Activated B cell treated with CpG ODN at 0.5 μM for 24 hours (primary cell): ENCODE measurements at regions of chr7 and their contacts with region 1.

Region 1: DNA sequence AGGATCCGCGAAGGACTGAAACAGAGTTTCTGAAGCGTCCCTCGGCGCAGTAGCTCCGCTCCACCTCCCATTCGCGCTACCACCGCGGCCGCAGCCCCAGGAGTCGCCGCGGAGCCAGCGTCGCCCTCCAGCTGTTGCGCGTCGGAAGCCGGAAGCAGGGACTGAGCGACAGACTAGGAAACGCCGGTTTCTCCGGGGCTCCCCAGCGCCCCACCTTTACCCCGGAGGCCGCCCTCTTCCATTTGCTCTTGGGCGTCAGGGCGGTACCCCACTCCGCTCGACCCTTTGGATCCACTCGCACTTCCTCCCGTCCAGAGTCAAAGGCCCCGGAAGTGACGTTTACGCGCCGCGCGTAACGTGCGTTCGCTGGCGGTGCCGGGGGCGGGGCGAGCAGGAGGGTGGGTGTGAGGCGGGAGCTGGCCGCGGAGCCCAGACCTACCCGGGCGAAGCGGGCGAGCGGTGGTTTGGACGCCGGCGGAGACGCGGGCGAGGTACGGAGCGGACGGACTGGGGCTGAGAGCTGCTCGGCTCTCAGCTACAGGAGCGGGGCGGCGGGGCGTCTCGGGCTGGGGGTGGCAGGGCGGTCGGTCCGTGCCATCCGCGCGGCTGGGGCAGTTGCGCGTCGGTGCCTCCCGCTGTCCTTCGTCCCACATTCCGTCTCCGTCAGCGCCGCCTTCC is at the start of gene RABGEF1:
- DNase-seq: peak; percentile 96
- ATAC-seq: peak; percentile 84
- H3K4me3 Mint-ChIP-seq: peak within 1 kb of the TSS; percentile 93
- H3K27ac Mint-ChIP-seq: peak within 1 kb of the TSS; percentile 94
- H3K4me1 Mint-ChIP-seq: peaks cover 74% of the 10 kb centered on the region
- H3K27me3 Mint-ChIP-seq: no peaks in the 10 kb centered on the region
- CTCF ChIP-seq: no peak
- total RNA-seq, gene RABGEF1: 19.7 and 21.1 TPM in 2 replicates

Region 2: DNA sequence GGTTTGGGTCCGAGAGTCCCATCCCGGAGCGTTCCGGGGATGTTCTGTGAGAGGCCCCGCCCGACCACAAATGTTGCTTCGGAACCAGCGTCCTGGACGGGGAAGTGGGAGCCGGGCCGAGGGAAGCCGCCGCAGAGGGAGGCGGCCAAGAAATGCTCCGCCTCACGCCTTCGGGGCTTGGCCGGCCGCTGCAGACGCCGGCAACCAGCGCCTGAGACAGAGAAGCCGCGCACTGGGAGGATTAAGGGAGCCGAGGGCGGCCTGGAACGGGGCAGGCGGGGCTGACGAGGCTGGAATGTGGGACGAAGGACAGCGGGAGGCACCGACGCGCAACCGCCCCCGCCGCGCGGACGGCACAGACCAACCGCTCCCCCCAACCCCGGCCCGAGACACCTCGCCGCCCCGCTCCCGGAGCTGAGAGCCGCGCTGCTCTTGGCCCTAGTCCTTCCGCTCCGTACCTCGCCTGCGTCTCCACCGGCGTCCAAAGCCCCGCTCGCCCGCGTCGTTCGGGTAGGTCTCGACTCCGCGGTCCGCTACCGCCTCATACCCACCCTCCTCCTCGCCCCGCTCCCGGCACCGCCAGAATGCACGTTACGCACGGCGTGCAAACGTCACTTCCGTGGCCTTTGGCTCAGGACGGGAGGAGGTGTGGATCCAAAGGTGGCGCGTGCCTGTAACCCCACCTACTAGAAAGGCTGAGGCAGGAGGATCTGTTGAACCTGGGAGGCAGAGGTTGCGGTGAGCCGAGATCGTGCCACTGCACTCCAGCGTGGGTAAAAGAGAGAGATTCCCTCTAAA is 148.4 kb before region 1 on chr7:
- CTCF ChIA-PET with region 1: no interaction called
- POLR2A ChIA-PET with region 1: interaction called, 7 read pairs
- intact Hi-C with region 1: loop called (anchors 1 kb)
- DNase-seq: peak; percentile 80
- ATAC-seq: peak; percentile 98
- H3K4me3 Mint-ChIP-seq: peak overlapping the region; percentile 98
- H3K27ac Mint-ChIP-seq: peak overlapping the region; percentile 91
- H3K4me1 Mint-ChIP-seq: peaks cover 52% of the 10 kb centered on the region
- H3K27me3 Mint-ChIP-seq: no peaks in the 10 kb centered on the region
- CTCF ChIP-seq: no peak

Region 3: DNA sequence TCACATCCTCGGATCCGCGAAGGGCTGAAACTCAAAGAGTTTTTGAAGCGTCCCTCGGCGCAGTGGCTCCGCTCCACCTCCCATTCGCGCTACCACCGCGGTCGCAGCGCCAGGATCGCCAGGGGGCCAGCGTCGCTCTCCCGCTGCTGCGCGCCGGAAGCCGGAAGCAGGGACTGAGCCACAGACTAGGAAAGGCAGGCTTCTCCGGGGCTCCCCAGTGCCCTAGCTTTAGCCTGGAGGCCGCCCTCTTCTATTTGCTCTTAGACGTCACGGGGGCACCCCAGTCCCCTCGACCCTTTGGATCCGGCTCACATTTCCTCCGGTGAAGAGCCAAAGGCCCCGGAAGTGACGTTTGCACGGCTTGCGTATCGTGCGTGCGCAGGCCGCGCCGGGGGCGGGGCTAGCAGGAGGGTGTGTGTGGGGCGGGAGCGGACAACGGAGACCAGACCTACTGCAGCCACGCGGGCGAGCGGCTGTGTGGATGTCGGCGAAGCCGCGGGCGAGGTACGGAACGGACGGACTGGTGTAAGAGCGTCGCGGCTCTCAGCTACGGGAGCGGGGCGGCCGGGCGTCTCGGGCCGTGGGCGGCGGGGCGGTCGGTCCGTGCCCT is 86.2 kb before region 1 on chr7:
- CTCF ChIA-PET with region 1: no interaction called
- POLR2A ChIA-PET with region 1: interaction called, 16 read pairs
- intact Hi-C with region 1: loop called (anchors 1 kb)
- DNase-seq: peak; percentile 97
- ATAC-seq: peak; percentile 91
- H3K4me3 Mint-ChIP-seq: peak overlapping the region; percentile 94
- H3K27ac Mint-ChIP-seq: peak overlapping the region; percentile 96
- H3K4me1 Mint-ChIP-seq: peaks cover 30% of the 10 kb centered on the region
- H3K27me3 Mint-ChIP-seq: no peaks in the 10 kb centered on the region
- CTCF ChIP-seq: no peak

Region 4: GRCh38 chr7:66681491-66682349 is 58.7 kb before region 1 on chr7:
- CTCF ChIA-PET with region 1: no interaction called
- POLR2A ChIA-PET with region 1: interaction called, 8 read pairs
- intact Hi-C with region 1: loop called (anchors 1 kb)
- DNase-seq: peak; percentile 95
- ATAC-seq: peak; percentile 93
- H3K4me3 Mint-ChIP-seq: peak overlapping the region; percentile 89
- H3K27ac Mint-ChIP-seq: peak overlapping the region; percentile 89
- H3K4me1 Mint-ChIP-seq: peaks cover 48% of the 10 kb centered on the region
- H3K27me3 Mint-ChIP-seq: no peaks in the 10 kb centered on the region
- CTCF ChIP-seq: no peak

Region 5: GRCh38 chr7:66758950-66759628 is 18.6 kb after region 1 on chr7:
- CTCF ChIA-PET with region 1: no interaction called
- POLR2A ChIA-PET with region 1: interaction called, 4 read pairs
- intact Hi-C with region 1: loop called (anchors 1 kb)
- DNase-seq: no peak
- ATAC-seq: peak; percentile 85
- H3K4me3 Mint-ChIP-seq: peak overlapping the region; percentile 39
- H3K27ac Mint-ChIP-seq: peak overlapping the region; percentile 72
- H3K4me1 Mint-ChIP-seq: peaks cover 44% of the 10 kb centered on the region
- H3K27me3 Mint-ChIP-seq: no peaks in the 10 kb centered on the region
- CTCF ChIP-seq: no peak

Region 6: DNA sequence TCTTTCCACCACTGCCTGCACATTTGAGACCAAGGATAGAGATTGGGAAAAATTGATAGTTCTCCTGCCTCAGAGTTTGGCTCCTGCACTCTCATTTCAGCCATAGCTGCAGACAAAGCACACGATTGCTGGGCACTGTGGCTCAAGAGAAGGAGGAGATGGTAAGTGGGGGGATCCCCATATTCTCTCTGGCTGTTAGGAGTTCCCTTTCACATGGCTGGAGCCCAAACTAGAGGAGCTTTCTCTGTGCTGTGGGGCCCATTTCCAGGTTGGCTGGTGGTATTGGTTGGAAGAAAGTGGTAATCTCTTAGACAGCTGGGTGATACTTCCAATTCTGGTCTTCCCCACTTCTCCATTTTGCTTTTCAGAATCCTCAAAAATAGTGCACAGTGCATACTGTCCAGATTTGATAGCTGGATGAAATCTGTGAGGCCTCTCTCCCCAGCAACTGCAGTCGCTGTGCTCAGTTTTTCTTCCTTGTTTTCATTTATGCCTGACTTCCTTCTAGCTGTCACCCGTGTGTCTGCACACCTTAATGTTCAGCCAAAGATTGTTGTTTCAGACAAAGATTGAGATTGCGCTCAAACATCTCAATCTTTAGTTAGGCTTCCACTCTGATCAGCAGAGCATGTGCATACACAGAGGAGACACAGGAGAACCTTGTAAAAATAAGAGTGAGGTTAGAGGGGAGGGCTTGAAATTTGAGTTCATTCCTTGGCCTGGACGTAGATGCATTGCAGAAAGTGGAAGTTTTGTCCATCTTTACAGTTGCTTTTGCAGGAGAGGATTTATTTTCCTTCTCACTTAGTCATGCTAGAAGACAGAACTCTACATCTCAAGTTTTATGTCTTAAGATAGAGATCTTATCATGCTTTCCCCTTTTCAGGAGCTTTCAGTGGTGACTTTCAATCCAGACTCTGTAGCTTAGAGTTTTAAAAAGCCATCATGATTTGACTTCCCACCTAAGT is 28.7 kb after region 1 on chr7:
- CTCF ChIA-PET with region 1: no interaction called
- POLR2A ChIA-PET with region 1: interaction called, 6 read pairs
- intact Hi-C with region 1: loop called (anchors 5 kb)
- DNase-seq: no peak
- ATAC-seq: peak; percentile 31
- H3K4me3 Mint-ChIP-seq: peak overlapping the region; percentile 0
- H3K27ac Mint-ChIP-seq: peak overlapping the region; percentile 76
- H3K4me1 Mint-ChIP-seq: peaks cover 62% of the 10 kb centered on the region
- H3K27me3 Mint-ChIP-seq: no peaks in the 10 kb centered on the region
- CTCF ChIP-seq: no peak

Region 7: DNA sequence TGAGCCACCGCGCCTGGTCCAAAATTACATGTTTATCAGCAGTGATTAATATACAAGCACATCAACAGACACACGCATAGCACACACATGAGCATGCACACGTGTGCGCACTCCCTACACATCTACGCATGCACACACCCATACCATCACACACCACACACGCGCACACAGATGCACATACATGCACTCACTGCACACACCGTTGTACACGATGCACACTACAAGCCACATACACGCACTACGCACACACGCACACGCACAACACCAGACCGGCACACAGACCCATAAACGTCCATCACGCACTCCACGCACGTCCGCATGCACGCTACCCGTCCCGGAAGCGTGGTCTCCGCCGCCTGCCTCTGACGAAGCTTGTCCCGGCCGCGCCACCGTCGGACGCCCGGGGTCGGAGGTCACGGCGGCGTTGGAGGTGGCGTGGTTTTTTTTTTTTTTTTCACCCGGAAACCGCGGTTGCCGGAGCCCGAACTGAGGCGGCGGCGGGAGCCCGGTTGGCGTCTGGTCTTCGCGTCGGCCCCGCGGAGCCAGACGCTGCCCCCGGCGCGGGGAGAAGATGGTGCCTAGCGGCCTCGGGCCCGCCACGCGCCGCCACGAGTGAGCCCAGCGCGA is 180.4 kb after region 1 on chr7 and contains the start of gene TMEM248:
- CTCF ChIA-PET with region 1: no interaction called
- POLR2A ChIA-PET with region 1: interaction called, 8 read pairs
- intact Hi-C with region 1: loop called (anchors 1 kb)
- DNase-seq: peak; percentile 94
- ATAC-seq: peak; percentile 90
- H3K4me3 Mint-ChIP-seq: peak within 1 kb of the TSS; percentile 99
- H3K27ac Mint-ChIP-seq: peak within 1 kb of the TSS; percentile 92
- H3K4me1 Mint-ChIP-seq: peaks cover 34% of the 10 kb centered on the region
- H3K27me3 Mint-ChIP-seq: no peaks in the 10 kb centered on the region
- CTCF ChIP-seq: no peak
- total RNA-seq, gene TMEM248: 89.2 and 95.0 TPM in 2 replicates